ENCODE measurements at regions of chr9 and their contacts with region 1.

Region 1: DNA sequence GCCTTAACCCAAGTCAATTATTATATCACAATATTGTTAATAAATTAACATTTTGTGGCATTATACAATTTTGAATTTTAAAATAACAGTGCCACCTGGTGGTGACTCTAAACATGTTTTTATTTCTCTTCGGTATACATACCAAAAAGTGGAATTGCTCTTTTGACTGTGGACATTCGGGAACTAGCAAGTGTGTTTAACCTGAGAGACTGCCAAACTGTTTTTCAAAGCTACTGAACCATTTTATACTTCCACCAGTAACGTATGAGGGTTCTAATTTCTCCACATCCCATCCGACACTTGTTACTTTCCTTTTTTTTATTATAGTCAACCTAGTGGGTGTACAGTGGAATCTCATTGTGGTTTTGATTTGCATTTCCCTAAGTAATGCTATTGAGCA is 18.3 kb upstream of the HSDL2 start:
- DNase-seq: peak; percentile 74
- H3K4me3 Mint-ChIP-seq: no peak overlapping the region
- H3K27ac Mint-ChIP-seq: no peak overlapping the region
- H3K4me1 Mint-ChIP-seq: peaks cover 13% of the 10 kb centered on the region
- H3K27me3 Mint-ChIP-seq: peaks cover 11% of the 10 kb centered on the region

Region 2: GRCh38 chr9:111759762-111760639 is 601.6 kb before region 1 on chr9:
- intact Hi-C with region 1: loop called (anchors 1 kb)
- DNase-seq: peak; percentile 87
- H3K4me3 Mint-ChIP-seq: no peak overlapping the region
- H3K27ac Mint-ChIP-seq: no peak overlapping the region
- H3K4me1 Mint-ChIP-seq: no peaks in the 10 kb centered on the region
- H3K27me3 Mint-ChIP-seq: no peaks in the 10 kb centered on the region

Region 3: DNA sequence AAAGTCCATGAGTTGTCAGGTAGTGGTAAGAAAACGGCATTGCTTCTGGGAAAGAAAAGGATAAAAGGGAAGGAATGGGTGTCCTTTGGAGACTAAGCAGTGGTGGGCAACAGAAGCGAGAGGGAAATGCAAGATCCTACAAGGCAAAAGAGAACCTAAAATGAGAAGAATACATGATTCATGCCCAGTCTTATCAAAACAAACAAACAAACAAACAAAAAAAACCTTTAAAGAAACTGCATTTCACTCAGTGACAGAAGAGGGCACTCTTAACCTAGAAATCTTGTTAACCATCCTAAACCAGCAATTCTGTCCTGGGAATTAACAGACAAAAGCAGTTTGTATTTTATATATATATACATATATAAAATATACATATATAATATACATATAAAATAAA is 275.0 kb before region 1 on chr9:
- intact Hi-C with region 1: loop called (anchors 1 kb)
- DNase-seq: no peak
- H3K4me3 Mint-ChIP-seq: no peak overlapping the region
- H3K27ac Mint-ChIP-seq: no peak overlapping the region
- H3K4me1 Mint-ChIP-seq: no peaks in the 10 kb centered on the region
- H3K27me3 Mint-ChIP-seq: no peaks in the 10 kb centered on the region

Region 4: GRCh38 chr9:112097712-112098688 is 263.6 kb before region 1 on chr9:
- intact Hi-C with region 1: loop called (anchors 1 kb)
- DNase-seq: peak; percentile 91
- H3K4me3 Mint-ChIP-seq: no peak overlapping the region
- H3K27ac Mint-ChIP-seq: peak overlapping the region; percentile 23
- H3K4me1 Mint-ChIP-seq: peaks cover 29% of the 10 kb centered on the region
- H3K27me3 Mint-ChIP-seq: no peaks in the 10 kb centered on the region

Region 5: GRCh38 chr9:112112941-112113681 is 248.5 kb before region 1 on chr9:
- intact Hi-C with region 1: loop called (anchors 1 kb)
- DNase-seq: peak; percentile 67
- H3K4me3 Mint-ChIP-seq: no peak overlapping the region
- H3K27ac Mint-ChIP-seq: no peak overlapping the region
- H3K4me1 Mint-ChIP-seq: no peaks in the 10 kb centered on the region
- H3K27me3 Mint-ChIP-seq: no peaks in the 10 kb centered on the region

Region 6: DNA sequence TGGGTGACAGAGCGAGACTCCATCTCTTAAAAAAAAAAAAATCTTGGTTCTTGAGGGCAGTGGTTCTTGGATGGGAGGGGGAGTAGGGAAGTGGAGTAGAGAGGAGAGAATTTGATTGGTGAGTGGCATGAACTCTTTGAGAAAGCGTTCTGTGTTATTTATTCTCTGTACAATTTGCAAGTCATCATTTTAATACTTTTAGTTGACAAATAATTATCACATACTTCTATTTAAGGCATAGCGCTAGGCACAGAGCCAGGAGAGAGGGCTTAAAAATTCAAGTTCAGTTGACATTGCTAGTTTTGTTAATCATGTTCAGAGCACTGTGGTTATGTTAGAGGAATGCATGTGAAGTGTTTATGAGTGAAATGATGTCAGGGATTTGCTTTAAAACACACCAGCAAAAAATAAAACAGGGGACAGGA is 42.9 kb after region 1 on chr9:
- intact Hi-C with region 1: no loop called
- DNase-seq: no peak
- H3K4me3 Mint-ChIP-seq: no peak overlapping the region
- H3K27ac Mint-ChIP-seq: no peak overlapping the region
- H3K4me1 Mint-ChIP-seq: no peaks in the 10 kb centered on the region
- H3K27me3 Mint-ChIP-seq: no peaks in the 10 kb centered on the region

Measured in activated CD4-positive, alpha-beta T cell treated with anti-CD3 and anti-CD28 coated beads, Interleukin-2, amount 10 ng/mL, durations not matched to agents 24 days and 14 days (primary cell).